ENCODE measurements at regions of chr2 and their contacts with region 1.

Region 1: GRCh38 chr2:97710596-97711386 is 2.6 kb upstream of the ZAP70 start:
- DNase-seq: no peak
- H3K4me3 Mint-ChIP-seq: no peak overlapping the region
- H3K27ac Mint-ChIP-seq: peak overlapping the region; percentile 83
- H3K4me1 Mint-ChIP-seq: peaks cover 45% of the 10 kb centered on the region
- H3K27me3 Mint-ChIP-seq: no peaks in the 10 kb centered on the region

Region 2: GRCh38 chr2:97745474-97746174 is 34.8 kb after region 1 on chr2:
- intact Hi-C with region 1: loop called (anchors 1 kb)
- DNase-seq: peak; percentile 46
- H3K4me3 Mint-ChIP-seq: no peak overlapping the region
- H3K27ac Mint-ChIP-seq: peak overlapping the region; percentile 1
- H3K4me1 Mint-ChIP-seq: peaks cover 57% of the 10 kb centered on the region
- H3K27me3 Mint-ChIP-seq: no peaks in the 10 kb centered on the region